IMR-90 (cell line): ENCODE measurements at regions of chr7 and their contacts with region 1.

Region 1: GRCh38 chr7:33185786-33186185 is 56.4 kb downstream of the BBS9 start:
- DNase-seq: peak; percentile 68
- ATAC-seq: peak; percentile 97
- H3K4me3 ChIP-seq: no peak overlapping the region
- H3K27ac ChIP-seq: no peak overlapping the region
- H3K4me1 ChIP-seq: no peaks in the 10 kb centered on the region
- H3K27me3 ChIP-seq: no peaks in the 10 kb centered on the region
- CTCF ChIP-seq: peak; percentile 80
- POLR2A ChIP-seq: no peak
- RAD21 ChIP-seq: peak; percentile 85

Region 2: DNA sequence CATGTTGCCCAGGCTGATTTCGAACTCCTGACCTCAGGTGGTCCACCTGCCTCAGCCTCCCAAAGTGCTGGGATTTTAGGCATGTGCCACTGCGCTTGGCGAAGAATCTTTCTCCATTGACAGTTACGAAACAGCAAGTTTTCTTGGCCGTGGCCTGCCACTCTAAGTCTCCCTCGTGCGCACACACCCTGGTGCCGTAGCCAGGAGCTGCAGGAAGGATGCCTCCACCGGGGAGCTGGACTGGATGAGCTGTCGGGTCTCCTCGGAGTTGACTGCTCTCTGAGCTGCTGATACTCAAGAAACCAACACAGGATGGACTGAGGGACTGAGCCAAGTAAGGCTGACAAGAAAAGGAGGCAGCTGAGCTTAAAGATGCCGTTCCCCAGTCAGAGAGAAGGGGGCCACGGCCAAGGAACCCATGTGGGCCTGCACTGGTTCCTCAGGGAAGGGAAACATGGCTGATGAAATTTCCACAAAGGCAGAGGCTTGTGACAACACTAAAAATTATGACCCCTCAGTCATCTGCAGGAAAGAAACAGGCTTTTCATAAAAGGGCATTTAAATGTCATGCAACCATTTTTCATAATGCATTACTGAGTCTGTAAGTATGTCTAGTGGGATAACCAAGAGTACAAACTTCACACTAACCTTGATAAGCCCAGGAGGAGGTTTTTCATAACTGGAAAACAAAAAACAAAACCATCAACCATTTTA is 256.2 kb before region 1 on chr7:
- CTCF ChIA-PET with region 1: no interaction called
- POLR2A ChIA-PET with region 1: interaction called, 10 read pairs
- dilution Hi-C with region 1: no loop called
- in situ Hi-C with region 1: no loop called
- intact Hi-C with region 1: no loop called
- DNase-seq: no peak
- ATAC-seq: no peak
- H3K4me3 ChIP-seq: no peak overlapping the region
- H3K27ac ChIP-seq: no peak overlapping the region
- H3K4me1 ChIP-seq: no peaks in the 10 kb centered on the region
- H3K27me3 ChIP-seq: no peaks in the 10 kb centered on the region
- CTCF ChIP-seq: no peak
- POLR2A ChIP-seq: no peak
- RAD21 ChIP-seq: no peak

Region 3: DNA sequence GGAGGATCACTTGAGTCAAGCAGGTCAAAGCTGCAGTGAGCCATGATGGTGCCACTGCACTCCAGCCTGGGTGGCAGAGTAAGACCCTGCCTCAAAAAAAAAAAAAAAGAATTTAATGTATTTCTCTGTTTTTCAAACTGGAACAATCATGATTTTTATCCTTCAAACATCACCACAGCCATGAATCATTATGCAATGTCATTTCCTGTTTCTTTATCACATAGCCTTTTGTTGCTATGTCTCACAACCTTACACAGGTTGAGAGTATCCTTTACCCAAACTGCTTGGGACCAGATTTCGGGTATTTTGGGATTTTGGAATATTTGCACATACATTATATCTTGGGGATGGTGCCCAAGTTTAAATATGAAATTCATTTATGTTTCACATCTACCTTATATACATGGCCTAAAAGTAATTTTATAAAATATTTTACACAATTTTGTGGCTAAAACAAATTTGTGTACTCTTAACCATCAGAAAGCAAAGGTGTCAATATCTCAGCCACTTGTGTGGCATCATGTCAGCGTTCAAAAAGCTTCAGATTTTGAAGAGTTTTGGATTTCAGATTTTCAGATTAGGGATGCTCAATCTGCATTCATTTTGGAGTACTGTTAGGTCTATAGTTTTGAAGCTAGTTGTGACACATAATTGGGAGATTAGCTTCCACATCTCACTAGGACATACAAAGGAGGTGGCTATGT is 131.4 kb before region 1 on chr7:
- CTCF ChIA-PET with region 1: no interaction called
- POLR2A ChIA-PET with region 1: no interaction called
- dilution Hi-C with region 1: no loop called
- in situ Hi-C with region 1: no loop called
- intact Hi-C with region 1: no loop called
- DNase-seq: peak; percentile 39
- ATAC-seq: 0 out of 2 replicates have a peak, but pooled peaks have one; percentile 22
- H3K4me3 ChIP-seq: no peak overlapping the region
- H3K27ac ChIP-seq: no peak overlapping the region
- H3K4me1 ChIP-seq: peaks cover 4% of the 10 kb centered on the region; the same call in 1 of the 2 replicates
- H3K27me3 ChIP-seq: no peaks in the 10 kb centered on the region
- CTCF ChIP-seq: no peak
- POLR2A ChIP-seq: no peak
- RAD21 ChIP-seq: no peak